ENCODE measurements at regions of chr17 and their contacts with region 1.

Region 1: DNA sequence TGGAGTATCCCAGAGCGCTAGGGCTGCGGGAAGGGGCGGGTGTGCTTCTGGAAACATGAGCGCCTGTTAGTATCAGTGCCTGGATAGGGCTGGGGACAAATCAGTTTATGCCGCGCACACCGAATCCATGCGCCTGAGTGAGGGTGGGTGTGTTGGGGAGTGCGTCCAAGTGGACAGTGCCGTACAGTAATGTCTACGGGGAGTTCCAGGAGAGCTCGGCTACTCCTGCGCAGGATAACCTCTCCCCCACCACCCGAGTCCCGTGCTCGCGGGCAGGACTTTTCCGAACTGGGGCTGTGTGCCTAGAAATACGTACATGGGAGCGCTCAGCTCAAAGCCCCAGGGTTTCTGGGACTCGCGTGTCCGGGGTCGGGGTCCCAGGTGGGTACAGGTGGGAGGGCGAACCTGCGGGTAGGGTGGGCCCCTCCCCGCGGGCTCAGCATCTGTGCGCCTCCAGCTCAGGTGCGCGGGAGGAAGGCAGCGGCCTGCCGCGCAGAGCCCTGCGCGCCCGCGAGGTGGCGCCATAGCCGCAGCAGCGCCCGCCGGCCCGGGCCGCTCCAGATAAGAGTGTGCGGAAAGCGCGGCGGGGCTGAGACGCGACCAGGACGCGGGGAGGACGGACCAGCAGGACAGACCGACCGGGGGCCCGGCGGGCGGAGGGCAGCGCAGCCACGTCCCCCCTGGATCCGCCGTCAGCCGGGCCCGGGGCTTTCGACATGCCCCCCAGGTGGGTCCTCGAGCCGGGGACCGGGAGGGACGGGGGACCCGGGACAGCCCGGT is at the start of gene HIC1:
- DNase-seq: peak; percentile 57
- H3K4me3 ChIP-seq: peak within 1 kb of the TSS; percentile 43 to 55 (median 45)
- H3K27ac ChIP-seq: no peak within 1 kb of the TSS
- H3K4me1 ChIP-seq: peaks cover 15% of the 10 kb centered on the region
- H3K27me3 ChIP-seq: no peaks in the 10 kb centered on the region
- CTCF ChIP-seq: peak; percentile 68 to 71
- total RNA-seq, gene HIC1: 0.67 to 1.3 TPM

Region 2: GRCh38 chr17:1813088-1813487 is 241.6 kb before region 1 on chr17:
- CTCF ChIA-PET with region 1: no interaction called
- dilution Hi-C with region 1: no loop called
- in situ Hi-C with region 1: no loop called
- intact Hi-C with region 1: no loop called
- DNase-seq: no peak
- H3K4me3 ChIP-seq: no peak overlapping the region
- H3K27ac ChIP-seq: no peak overlapping the region
- H3K4me1 ChIP-seq: no peaks in the 10 kb centered on the region
- H3K27me3 ChIP-seq: no peaks in the 10 kb centered on the region
- CTCF ChIP-seq: no peak

Region 3: GRCh38 chr17:2157675-2158395 is 103.1 kb after region 1 on chr17:
- CTCF ChIA-PET with region 1: no interaction called
- dilution Hi-C with region 1: no loop called
- in situ Hi-C with region 1: no loop called
- intact Hi-C with region 1: no loop called
- DNase-seq: peak; percentile 84
- H3K4me3 ChIP-seq: no peak overlapping the region
- H3K27ac ChIP-seq: no peak overlapping the region
- H3K4me1 ChIP-seq: peaks cover 17% of the 10 kb centered on the region
- H3K27me3 ChIP-seq: no peaks in the 10 kb centered on the region
- CTCF ChIP-seq: no peak

Region 4: GRCh38 chr17:2230877-2231276 is 176.2 kb after region 1 on chr17:
- CTCF ChIA-PET with region 1: interaction called, 3 read pairs
- dilution Hi-C with region 1: no loop called
- in situ Hi-C with region 1: no loop called
- intact Hi-C with region 1: loop called (anchors 1 kb)
- DNase-seq: no peak
- H3K4me3 ChIP-seq: no peak overlapping the region
- H3K27ac ChIP-seq: no peak overlapping the region
- H3K4me1 ChIP-seq: peaks cover 13% of the 10 kb centered on the region
- H3K27me3 ChIP-seq: no peaks in the 10 kb centered on the region
- CTCF ChIP-seq: no peak

Region 5: GRCh38 chr17:2282297-2282873 is 227.7 kb after region 1 on chr17:
- CTCF ChIA-PET with region 1: no interaction called
- dilution Hi-C with region 1: no loop called
- in situ Hi-C with region 1: no loop called
- intact Hi-C with region 1: loop called (anchors 2 kb)
- DNase-seq: peak; percentile 46
- H3K4me3 ChIP-seq: no peak overlapping the region
- H3K27ac ChIP-seq: no peak overlapping the region
- H3K4me1 ChIP-seq: no peaks in the 10 kb centered on the region
- H3K27me3 ChIP-seq: no peaks in the 10 kb centered on the region
- CTCF ChIP-seq: peak; percentile 44 to 67

Measured in mammary epithelial cell (primary cell).